Mammary epithelial cell (primary cell): ENCODE measurements at regions of chr6 and their contacts with region 1.

Region 1: DNA sequence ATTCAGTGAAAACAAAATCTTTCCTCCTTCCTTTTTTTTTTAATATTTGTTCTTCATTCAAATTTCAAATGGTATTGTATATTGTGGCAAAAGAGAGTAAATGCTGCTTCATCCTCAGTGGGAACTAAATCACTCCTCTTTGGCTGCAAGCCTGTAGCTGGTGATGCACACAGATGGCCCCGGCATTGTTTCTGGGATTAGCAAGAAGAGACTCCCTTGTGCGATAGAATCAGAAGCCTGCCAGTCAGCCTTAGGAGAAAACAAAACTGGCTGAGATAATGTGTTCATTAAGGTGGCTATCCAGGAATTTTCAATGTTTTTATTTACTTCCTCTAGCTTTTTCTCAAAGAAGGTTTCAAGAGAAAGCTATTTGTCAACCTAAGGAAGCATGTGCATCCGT is 20.7 kb upstream of the ELOVL2 start:
- DNase-seq: no peak
- H3K4me3 ChIP-seq: no peak overlapping the region
- H3K27ac ChIP-seq: no peak overlapping the region
- H3K4me1 ChIP-seq: no peaks in the 10 kb centered on the region
- H3K27me3 ChIP-seq: no peaks in the 10 kb centered on the region
- CTCF ChIP-seq: no peak

Region 2: DNA sequence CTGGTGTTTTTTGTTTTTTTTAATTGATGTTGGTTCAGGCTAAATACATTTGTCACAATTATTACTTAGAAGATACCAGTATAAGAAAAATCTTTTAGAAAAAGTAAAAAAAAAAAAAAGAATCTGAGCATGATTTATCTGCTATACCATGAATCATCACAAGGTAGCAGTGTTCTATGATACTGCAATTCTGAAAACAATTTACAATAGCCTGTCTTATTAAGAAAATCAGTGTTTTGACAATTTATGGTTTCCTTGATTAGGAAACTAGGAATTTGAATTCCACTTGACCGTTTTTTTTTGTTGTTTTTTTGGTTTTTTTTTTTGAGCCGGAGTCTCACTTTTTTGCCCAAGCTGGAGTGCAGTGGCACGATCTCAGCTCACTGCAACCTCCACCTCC is 217.2 kb before region 1 on chr6:
- CTCF ChIA-PET with region 1: no interaction called
- dilution Hi-C with region 1: no loop called
- in situ Hi-C with region 1: no loop called
- intact Hi-C with region 1: loop called (anchors 2 kb)
- DNase-seq: no peak
- H3K4me3 ChIP-seq: no peak overlapping the region
- H3K27ac ChIP-seq: no peak overlapping the region
- H3K4me1 ChIP-seq: no peaks in the 10 kb centered on the region
- H3K27me3 ChIP-seq: no peaks in the 10 kb centered on the region
- CTCF ChIP-seq: peak; percentile 30

Region 3: DNA sequence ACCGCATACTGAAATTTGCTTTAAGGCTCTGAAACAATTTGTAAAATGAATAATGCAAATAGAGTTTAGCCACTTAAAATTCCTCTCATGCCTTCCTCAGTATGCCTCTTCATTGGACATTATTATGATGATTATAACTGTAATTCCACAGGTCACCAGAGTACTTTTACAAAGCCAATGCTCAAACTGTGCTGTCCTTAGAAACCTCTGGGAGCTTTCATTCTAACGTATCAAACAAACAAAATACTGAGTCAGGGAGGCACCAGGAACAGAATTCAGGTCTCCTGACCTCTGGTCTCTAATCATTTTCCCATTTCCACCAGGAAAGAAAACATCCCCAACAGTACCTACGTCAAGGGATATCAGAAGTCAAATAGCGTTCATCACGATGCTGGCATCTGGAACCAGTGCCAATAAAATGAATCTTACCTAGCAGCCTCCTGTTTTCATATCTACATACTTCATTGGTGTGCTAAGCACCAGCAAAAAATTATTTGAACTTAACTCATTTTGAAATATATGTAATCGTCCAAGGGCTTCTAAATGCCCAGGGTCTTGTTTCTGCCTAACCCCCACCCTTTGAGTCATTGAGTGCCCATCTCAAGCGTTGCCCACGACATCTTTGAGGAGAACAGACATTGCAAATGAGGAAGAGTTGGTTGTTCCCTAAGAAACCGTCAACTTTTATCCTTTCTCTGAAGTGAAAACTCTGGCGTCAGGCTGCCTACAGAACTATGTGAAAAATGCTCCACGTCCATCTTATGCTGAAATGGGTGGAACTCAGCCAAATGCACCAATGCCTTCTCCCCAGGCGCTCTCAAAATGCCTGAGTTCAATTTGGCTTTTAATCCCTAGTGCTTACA is 129.8 kb after region 1 on chr6:
- CTCF ChIA-PET with region 1: no interaction called
- dilution Hi-C with region 1: no loop called
- in situ Hi-C with region 1: no loop called
- intact Hi-C with region 1: no loop called
- DNase-seq: no peak
- H3K4me3 ChIP-seq: no peak overlapping the region
- H3K27ac ChIP-seq: no peak overlapping the region
- H3K4me1 ChIP-seq: peaks cover 3% of the 10 kb centered on the region
- H3K27me3 ChIP-seq: no peaks in the 10 kb centered on the region
- CTCF ChIP-seq: no peak

Region 4: DNA sequence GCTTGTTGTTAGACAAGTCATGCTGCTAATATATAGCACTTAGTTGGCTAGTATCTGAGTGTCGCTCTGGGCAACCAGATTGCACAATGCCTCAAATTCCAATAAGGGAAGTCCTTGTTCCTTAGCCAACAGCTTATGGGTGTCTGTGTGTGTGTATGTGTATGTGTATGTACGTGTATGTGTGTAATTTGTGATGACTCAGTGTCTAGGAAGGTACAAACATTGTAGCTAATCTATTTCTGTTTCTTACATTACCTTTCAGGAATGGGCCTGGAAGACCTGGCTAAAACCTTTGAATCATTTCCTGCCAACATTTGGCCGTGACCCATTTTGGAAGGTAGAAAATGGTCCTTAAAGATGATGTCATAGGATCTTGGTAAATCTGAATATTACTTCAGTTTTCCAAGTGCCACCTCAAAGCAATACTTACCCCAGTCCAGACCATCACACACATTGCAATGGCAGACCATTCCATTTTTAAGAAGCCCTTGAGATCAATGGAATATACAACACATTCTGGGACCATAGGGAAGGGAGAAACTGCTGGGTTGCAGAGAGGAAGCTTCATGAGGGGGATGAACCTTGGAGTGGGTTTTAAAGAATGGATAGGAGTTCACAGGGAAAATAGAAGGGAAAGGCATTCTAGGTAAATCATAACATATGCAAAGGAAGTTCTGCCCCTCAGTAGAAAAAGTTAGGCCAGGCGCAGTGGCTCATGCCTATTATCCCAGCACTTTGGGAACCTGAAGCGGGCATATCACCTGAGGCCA is 142.5 kb after region 1 on chr6:
- CTCF ChIA-PET with region 1: no interaction called
- dilution Hi-C with region 1: no loop called
- in situ Hi-C with region 1: no loop called
- intact Hi-C with region 1: no loop called
- DNase-seq: peak; percentile 99
- H3K4me3 ChIP-seq: no peak overlapping the region
- H3K27ac ChIP-seq: peak overlapping the region; percentile 99
- H3K4me1 ChIP-seq: peaks cover 36% of the 10 kb centered on the region
- H3K27me3 ChIP-seq: no peaks in the 10 kb centered on the region
- CTCF ChIP-seq: no peak